ENCODE measurements at regions of chr2 and their contacts with region 1.

Region 1: GRCh38 chr2:23824777-23825212 is 102.1 kb downstream of the ATAD2B start:
- DNase-seq: peak; percentile 59
- ATAC-seq: peak; percentile 67
- H3K4me3 Mint-ChIP-seq: no peak overlapping the region
- H3K27ac Mint-ChIP-seq: no peak overlapping the region
- H3K4me1 Mint-ChIP-seq: no peaks in the 10 kb centered on the region
- H3K27me3 Mint-ChIP-seq: no peaks in the 10 kb centered on the region

Region 2: GRCh38 chr2:23813438-23813837 is 11.4 kb before region 1 on chr2:
- CTCF ChIA-PET with region 1: interaction called, 14 read pairs
- POLR2A ChIA-PET with region 1: no interaction called
- DNase-seq: no peak
- ATAC-seq: no peak
- H3K4me3 Mint-ChIP-seq: no peak overlapping the region
- H3K27ac Mint-ChIP-seq: no peak overlapping the region
- H3K4me1 Mint-ChIP-seq: peaks cover 5% of the 10 kb centered on the region
- H3K27me3 Mint-ChIP-seq: no peaks in the 10 kb centered on the region

Region 3: GRCh38 chr2:23850564-23851256 is 25.9 kb after region 1 on chr2:
- CTCF ChIA-PET with region 1: interaction called, 15 read pairs
- POLR2A ChIA-PET with region 1: no interaction called
- DNase-seq: no peak
- ATAC-seq: no peak
- H3K4me3 Mint-ChIP-seq: no peak overlapping the region
- H3K27ac Mint-ChIP-seq: no peak overlapping the region
- H3K4me1 Mint-ChIP-seq: no peaks in the 10 kb centered on the region
- H3K27me3 Mint-ChIP-seq: no peaks in the 10 kb centered on the region

Region 4: DNA sequence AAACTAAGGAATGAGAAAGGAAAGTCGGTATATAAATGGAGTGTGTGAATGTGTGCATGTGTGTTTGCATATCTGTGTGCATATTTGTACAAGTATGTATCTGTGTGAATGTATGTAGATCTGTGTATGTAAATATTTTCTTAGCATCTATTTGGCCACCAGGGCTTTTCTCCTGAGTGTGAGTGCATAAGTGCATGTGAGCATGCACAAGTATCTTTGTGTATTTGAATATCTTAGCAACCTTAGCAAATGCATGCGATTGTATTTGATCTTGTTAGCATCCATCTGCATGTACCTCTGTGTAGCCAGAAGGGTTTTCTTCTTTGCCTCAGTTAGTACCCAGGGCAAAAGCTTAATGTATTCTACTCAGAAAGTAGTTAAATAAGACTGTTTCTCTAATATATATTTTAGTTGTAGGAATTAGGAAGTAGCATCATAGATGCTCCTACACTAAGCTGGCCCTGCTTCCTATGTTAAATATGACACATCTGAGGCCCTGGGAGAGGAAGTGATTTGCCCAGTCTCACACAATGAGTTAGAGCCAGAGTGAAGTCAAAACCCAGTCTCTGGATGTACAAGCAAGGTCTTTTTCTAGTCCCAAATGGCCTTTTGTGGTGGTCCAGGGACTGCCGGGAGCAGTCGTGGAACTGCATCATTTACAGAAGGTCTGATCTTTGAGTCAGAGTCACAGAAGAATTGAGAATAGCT is 233.9 kb after region 1 on chr2:
- CTCF ChIA-PET with region 1: interaction called, 19 read pairs
- POLR2A ChIA-PET with region 1: no interaction called
- DNase-seq: no peak
- ATAC-seq: no peak
- H3K4me3 Mint-ChIP-seq: no peak overlapping the region
- H3K27ac Mint-ChIP-seq: no peak overlapping the region
- H3K4me1 Mint-ChIP-seq: peaks cover 5% of the 10 kb centered on the region
- H3K27me3 Mint-ChIP-seq: no peaks in the 10 kb centered on the region

Region 5: GRCh38 chr2:24123195-24123921 is 298.6 kb after region 1 on chr2 and contains the starts of genes FAM228B and PFN4:
- CTCF ChIA-PET with region 1: interaction called, 15 read pairs
- POLR2A ChIA-PET with region 1: no interaction called
- DNase-seq: peak; percentile 78
- ATAC-seq: peak; percentile 94
- H3K4me3 Mint-ChIP-seq: peak within 1 kb of the TSS; percentile 79
- H3K27ac Mint-ChIP-seq: peak within 1 kb of the TSS; percentile 66
- H3K4me1 Mint-ChIP-seq: peaks cover 14% of the 10 kb centered on the region
- H3K27me3 Mint-ChIP-seq: no peaks in the 10 kb centered on the region
- total RNA-seq, gene FAM228B: 6.2 to 6.9 TPM
- total RNA-seq, gene PFN4: 0.26 TPM in 1 of 2 experiments, not detected in the other

Region 6: GRCh38 chr2:24691806-24692205 is 867.0 kb after region 1 on chr2:
- CTCF ChIA-PET with region 1: no interaction called
- POLR2A ChIA-PET with region 1: no interaction called
- DNase-seq: no peak
- ATAC-seq: no peak
- H3K4me3 Mint-ChIP-seq: no peak overlapping the region
- H3K27ac Mint-ChIP-seq: no peak overlapping the region
- H3K4me1 Mint-ChIP-seq: no peaks in the 10 kb centered on the region
- H3K27me3 Mint-ChIP-seq: no peaks in the 10 kb centered on the region

Measured in activated CD8-positive, alpha-beta T cell treated with anti-CD3 and anti-CD28 coated beads, Interleukin-2, amount 10 ng/mL, durations not matched to agents 7 days and 5 days (primary cell).